ENCODE measurements at regions of chr13 and their contacts with region 1.

Region 1: DNA sequence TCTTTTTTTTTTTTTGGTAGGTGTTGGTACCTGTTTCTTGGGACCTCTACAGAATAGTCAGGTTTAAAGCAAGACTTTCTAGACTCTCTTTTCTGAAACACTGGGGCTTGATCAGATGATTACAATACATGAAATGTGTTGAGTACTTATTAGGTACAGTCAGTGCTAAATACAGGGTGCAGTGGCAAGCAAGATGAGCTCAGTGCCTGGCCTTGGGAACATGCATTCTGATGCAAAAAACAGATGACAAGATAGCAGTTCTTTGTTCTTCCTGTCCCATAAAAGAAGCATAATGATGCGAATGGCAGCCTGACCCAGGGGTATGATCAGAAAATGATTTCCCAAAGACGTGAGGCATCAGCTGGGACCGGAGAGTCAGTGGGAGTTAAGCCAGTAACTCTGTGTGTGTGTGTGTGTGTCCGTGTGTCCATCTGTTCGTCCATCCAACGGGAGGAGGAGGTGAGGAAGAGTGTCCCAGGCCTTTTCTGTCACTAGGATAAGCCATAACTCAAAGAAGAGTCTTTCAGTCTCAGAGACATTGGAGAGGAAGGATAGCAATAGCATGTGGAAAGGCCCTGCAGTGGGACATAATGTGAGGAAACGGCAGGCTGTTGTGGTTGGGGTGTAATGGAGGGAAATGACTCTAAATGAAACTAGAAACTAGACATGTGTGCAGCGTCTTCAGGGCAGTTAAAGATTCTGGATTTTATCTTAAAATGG is 32.2 kb downstream of the SLAIN1 start:
- DNase-seq: peak; percentile 31
- CTCF ChIP-seq: no peak

Region 2: GRCh38 chr13:77740931-77741596 is 11.4 kb after region 1 on chr13:
- CTCF ChIA-PET with region 1: interaction called, 11 read pairs
- POLR2A ChIA-PET with region 1: no interaction called
- DNase-seq: no peak
- CTCF ChIP-seq: no peak

Measured in GM10248 (cell line).